ENCODE measurements at regions of chr5 and their contacts with region 1.

Region 1: GRCh38 chr5:145362261-145362660 is 472.9 kb downstream of the PRELID2 start:
- DNase-seq: peak; percentile 80
- H3K4me3 ChIP-seq: no peak overlapping the region
- H3K27ac ChIP-seq: peak overlapping the region; percentile 60
- H3K4me1 ChIP-seq: peaks cover 15% of the 10 kb centered on the region
- H3K27me3 ChIP-seq: no peaks in the 10 kb centered on the region
- CTCF ChIP-seq: no peak
- POLR2A ChIP-seq: no peak

Region 2: DNA sequence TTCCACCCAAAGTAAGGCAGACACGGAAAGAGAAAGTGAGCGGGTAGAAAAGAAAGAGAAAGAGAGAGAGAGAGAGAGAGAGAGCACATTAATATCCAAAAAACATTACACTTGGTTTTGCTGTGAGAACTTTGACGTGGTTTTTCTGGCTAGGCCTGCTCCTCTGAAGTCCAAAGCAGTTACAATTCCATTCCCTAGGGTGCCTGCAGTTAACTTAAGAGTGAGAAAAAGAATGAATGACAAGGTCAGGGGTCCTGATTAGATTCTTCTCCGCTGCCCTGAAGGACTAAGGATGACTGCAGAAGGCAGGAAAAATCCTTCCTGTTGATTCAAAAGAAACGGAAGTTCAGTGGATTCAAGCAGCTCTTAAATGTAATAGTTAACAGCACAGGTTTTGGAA is 116.9 kb before region 1 on chr5:
- CTCF ChIA-PET with region 1: no interaction called
- POLR2A ChIA-PET with region 1: no interaction called
- dilution Hi-C with region 1: no loop called
- intact Hi-C with region 1: loop called (anchors 1 kb)
- DNase-seq: peak; percentile 57
- H3K4me3 ChIP-seq: peak overlapping the region in 1 of 3 experiments; percentile 16
- H3K27ac ChIP-seq: peak overlapping the region; percentile 91
- H3K4me1 ChIP-seq: peaks cover 28% of the 10 kb centered on the region
- H3K27me3 ChIP-seq: no peaks in the 10 kb centered on the region
- CTCF ChIP-seq: no peak
- POLR2A ChIP-seq: no peak

Region 3: GRCh38 chr5:145347026-145347616 is 15.1 kb before region 1 on chr5:
- CTCF ChIA-PET with region 1: interaction called, 4 read pairs
- POLR2A ChIA-PET with region 1: no interaction called
- dilution Hi-C with region 1: no loop called
- intact Hi-C with region 1: loop called (anchors 2 kb)
- DNase-seq: peak; percentile 64
- H3K4me3 ChIP-seq: no peak overlapping the region
- H3K27ac ChIP-seq: no peak overlapping the region
- H3K4me1 ChIP-seq: peaks cover 21% of the 10 kb centered on the region
- H3K27me3 ChIP-seq: no peaks in the 10 kb centered on the region
- CTCF ChIP-seq: peak; percentile 50 to 64
- POLR2A ChIP-seq: no peak

Region 4: DNA sequence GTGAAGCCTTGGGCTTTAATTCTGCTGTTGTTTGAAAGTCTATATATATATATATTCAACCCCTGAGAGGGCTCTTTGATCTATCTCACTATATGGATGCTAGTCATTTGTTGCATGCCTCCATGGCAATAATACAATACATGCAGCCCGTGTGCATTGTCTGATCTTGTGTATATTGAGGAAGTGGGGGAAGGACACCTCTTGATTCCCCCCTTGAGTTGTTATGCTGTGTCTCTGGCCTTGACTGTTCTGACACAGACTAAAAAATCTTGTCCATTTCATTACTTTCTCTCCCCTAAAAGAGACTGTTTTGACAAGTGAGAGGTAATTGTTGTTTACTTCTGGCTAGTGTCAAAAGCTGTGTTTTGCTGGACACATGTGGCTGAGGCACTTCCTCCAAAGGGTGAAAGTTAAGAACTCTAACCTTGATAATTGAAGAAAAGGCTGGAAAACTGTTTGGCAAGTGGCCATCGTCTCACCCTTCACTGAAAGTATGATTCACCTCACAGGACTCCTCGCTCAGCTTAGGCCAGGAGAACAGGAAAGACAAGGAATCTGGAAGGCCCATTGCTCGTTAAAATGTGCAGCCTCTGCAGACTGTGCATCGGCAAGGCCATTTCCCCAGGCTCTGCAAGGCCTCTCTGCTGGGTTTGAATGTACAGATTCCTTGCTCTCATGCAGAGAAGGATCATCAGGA is 168.9 kb after region 1 on chr5:
- CTCF ChIA-PET with region 1: no interaction called
- POLR2A ChIA-PET with region 1: no interaction called
- dilution Hi-C with region 1: no loop called
- intact Hi-C with region 1: loop called (anchors 5 kb)
- DNase-seq: peak; percentile 95
- H3K4me3 ChIP-seq: no peak overlapping the region
- H3K27ac ChIP-seq: no peak overlapping the region
- H3K4me1 ChIP-seq: peaks cover 16% of the 10 kb centered on the region
- H3K27me3 ChIP-seq: no peaks in the 10 kb centered on the region
- CTCF ChIP-seq: no peak
- POLR2A ChIP-seq: no peak